Naive thymus-derived CD4-positive, alpha-beta T cell (primary cell): ENCODE measurements at regions of chr22 and their contacts with region 1.

Region 1: DNA sequence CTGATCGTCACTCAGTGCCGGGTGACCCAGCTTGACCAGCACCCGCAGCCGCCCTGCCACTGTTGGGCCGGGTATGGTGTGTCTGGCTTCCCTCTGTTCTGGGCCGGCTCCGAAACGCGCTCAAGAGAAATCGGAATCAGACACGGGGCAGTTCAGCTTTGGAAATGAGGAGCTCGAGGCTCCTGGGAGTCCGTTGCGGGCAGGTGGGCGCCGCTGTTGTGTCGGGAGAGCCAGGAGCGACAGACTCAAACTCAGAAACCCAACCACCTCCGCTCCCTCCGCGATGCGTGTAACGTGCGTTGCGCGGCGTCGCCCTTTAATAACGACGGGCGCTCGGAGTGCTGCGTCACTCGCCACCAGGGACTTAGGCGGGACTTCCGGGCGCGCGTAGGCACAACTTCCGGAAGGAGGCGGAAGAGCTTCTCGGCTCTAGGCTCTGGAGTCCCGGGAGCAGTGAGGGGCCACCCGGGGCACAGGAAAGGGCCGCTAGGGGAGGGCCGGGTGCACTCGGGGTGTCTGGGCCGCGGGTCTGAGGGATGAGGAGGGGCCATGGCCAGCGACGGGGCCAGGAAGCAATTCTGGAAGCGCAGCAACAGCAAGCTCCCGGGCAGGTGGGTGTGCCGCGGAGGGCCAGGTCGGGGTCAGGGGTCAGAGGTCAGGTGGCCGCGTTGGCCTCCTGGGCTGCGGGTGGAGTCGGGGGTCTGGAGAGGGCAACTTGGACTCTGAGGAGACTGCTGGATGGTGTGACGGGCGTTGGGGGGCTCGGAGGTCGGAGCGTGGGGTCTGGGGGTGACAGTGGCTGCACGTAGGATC is at the start of gene TBC1D22A:
- DNase-seq: peak; percentile 89 to 95 (median 93)
- ATAC-seq: peak; percentile 93
- H3K4me3 ChIP-seq: peak within 1 kb of the TSS; percentile 99
- H3K4me3 Mint-ChIP-seq: peak within 1 kb of the TSS; percentile 97 to 100 (median 99)
- H3K27ac ChIP-seq: peak within 1 kb of the TSS; percentile 99
- H3K27ac Mint-ChIP-seq: peak within 1 kb of the TSS; percentile 97 to 100 (median 100)
- H3K4me1 ChIP-seq: peaks cover 28 to 31% of the 10 kb centered on the region in 2 donors
- H3K4me1 Mint-ChIP-seq: peaks cover 46 to 74% (median 63%) of the 10 kb centered on the region in 7 donors
- H3K27me3 ChIP-seq: no peaks in the 10 kb centered on the region
- H3K27me3 Mint-ChIP-seq: no peaks in the 10 kb centered on the region
- total RNA-seq, gene TBC1D22A: 37.5 to 50.1 (median 43.4) TPM

Region 2: GRCh38 chr22:46563381-46564083 is 198.9 kb before region 1 on chr22:
- CTCF ChIA-PET with region 1: interaction called, 9 read pairs
- POLR2A ChIA-PET with region 1: interaction called, 4 read pairs
- intact Hi-C with region 1: loop called in 1 of 2 experiments (anchors 1 kb)
- DNase-seq: peak; percentile 60 to 82 (median 73)
- ATAC-seq: peak; percentile 94
- H3K4me3 ChIP-seq: peak overlapping the region; percentile 34
- H3K4me3 Mint-ChIP-seq: peak overlapping the region in 6 of 10 donors; percentile 54 to 65 (median 58)
- H3K27ac ChIP-seq: no peak overlapping the region
- H3K27ac Mint-ChIP-seq: peak overlapping the region in 1 of 9 donors; percentile 18
- H3K4me1 ChIP-seq: peaks cover 0 to 5% of the 10 kb centered on the region in 2 donors
- H3K4me1 Mint-ChIP-seq: peaks cover 4 to 11% (median 4%) of the 10 kb centered on the region in 7 donors
- H3K27me3 ChIP-seq: no peaks in the 10 kb centered on the region
- H3K27me3 Mint-ChIP-seq: no peaks in the 10 kb centered on the region

Region 3: DNA sequence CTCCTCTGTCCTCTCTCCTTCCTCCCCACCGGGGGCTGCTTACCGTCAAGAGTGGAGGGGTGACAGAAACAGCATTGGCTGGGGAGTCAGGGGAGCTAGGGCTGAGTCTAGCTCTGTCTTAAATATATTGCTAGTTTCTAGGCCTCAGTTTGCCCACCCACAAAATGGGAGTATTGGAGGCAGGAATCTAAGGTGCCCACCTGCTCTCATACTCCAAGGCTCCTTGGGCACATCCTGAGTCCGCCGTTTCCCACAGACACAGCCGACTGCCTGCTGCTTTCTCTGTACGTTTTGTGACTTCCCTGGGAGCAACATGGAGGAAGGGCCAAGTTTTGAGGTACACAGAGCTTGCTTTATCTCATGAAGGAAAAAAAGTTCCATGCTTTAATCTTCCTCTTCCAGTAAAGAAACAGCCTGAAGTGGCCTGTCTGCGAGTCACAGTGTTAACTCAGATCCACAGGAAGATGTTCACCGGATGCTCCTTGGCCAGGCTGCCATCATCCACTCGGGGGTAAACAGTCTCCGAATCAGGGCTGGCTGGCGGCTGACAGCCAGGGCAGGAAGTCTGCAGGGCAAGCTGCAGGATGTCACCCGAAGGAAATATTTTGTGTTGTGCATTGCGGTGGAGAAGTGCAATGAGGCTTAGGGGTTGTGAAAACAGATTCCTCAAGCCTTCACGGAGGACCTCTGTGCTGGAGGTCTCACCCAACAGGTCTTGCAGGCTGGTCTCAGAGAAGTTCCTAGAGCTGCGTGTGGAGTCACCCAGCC is 13.4 kb before region 1 on chr22:
- CTCF ChIA-PET with region 1: interaction called, 22 read pairs
- POLR2A ChIA-PET with region 1: interaction called, 255 read pairs
- intact Hi-C with region 1: loop called in 1 of 2 experiments (anchors 1 kb)
- DNase-seq: peak in 8 of 9 donors; percentile 35 to 83 (median 74)
- ATAC-seq: peak; percentile 64
- H3K4me3 ChIP-seq: peak overlapping the region; percentile 54
- H3K4me3 Mint-ChIP-seq: peak overlapping the region; percentile 63 to 87 (median 81)
- H3K27ac ChIP-seq: peak overlapping the region; percentile 66
- H3K27ac Mint-ChIP-seq: peak overlapping the region; percentile 87 to 99 (median 96)
- H3K4me1 ChIP-seq: peaks cover 29% of the 10 kb centered on the region in 2 donors
- H3K4me1 Mint-ChIP-seq: peaks cover 23 to 34% (median 28%) of the 10 kb centered on the region in 7 donors
- H3K27me3 ChIP-seq: no peaks in the 10 kb centered on the region
- H3K27me3 Mint-ChIP-seq: peaks cover 0 to 3% (median 0%) of the 10 kb centered on the region in 5 donors

Region 4: DNA sequence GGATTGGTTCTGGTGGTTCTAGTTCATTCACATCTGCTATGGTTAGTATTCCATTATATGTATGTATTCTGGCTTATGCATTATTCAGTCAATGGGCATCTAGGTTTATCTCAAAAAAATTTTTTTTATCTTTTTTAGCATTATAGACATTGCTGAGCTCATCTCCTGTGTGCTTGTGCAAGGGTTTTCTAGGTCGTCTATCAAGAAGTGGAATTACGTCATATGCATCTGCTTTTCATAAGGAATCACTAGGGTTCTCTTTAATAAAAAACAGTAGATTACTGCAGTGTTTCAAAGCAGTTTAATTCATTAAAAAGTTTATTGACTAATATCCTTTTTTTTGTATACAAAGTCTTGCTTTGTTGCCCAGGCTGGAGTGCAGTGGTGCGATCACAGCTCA is 21.3 kb after region 1 on chr22:
- CTCF ChIA-PET with region 1: interaction called, 6 read pairs
- POLR2A ChIA-PET with region 1: interaction called, 15 read pairs
- intact Hi-C with region 1: no loop called
- DNase-seq: no peak
- ATAC-seq: no peak
- H3K4me3 ChIP-seq: no peak overlapping the region
- H3K4me3 Mint-ChIP-seq: no peak overlapping the region
- H3K27ac ChIP-seq: no peak overlapping the region
- H3K27ac Mint-ChIP-seq: peak overlapping the region in 4 of 9 donors; percentile 25 to 48 (median 30)
- H3K4me1 ChIP-seq: peaks cover 0 to 4% of the 10 kb centered on the region in 2 donors
- H3K4me1 Mint-ChIP-seq: peaks cover 28 to 74% (median 40%) of the 10 kb centered on the region in 7 donors
- H3K27me3 ChIP-seq: no peaks in the 10 kb centered on the region
- H3K27me3 Mint-ChIP-seq: no peaks in the 10 kb centered on the region

Region 5: GRCh38 chr22:46798366-46799350 is 36.2 kb after region 1 on chr22:
- CTCF ChIA-PET with region 1: interaction called, 70 read pairs
- POLR2A ChIA-PET with region 1: interaction called, 72 read pairs
- intact Hi-C with region 1: loop called (anchors 1 kb)
- DNase-seq: peak; percentile 37 to 78 (median 59)
- ATAC-seq: peak; percentile 84
- H3K4me3 ChIP-seq: no peak overlapping the region
- H3K4me3 Mint-ChIP-seq: peak overlapping the region in 2 of 10 donors; percentile 13 to 34
- H3K27ac ChIP-seq: no peak overlapping the region
- H3K27ac Mint-ChIP-seq: peak overlapping the region; percentile 49 to 91 (median 80)
- H3K4me1 ChIP-seq: peaks cover 7 to 8% of the 10 kb centered on the region in 2 donors
- H3K4me1 Mint-ChIP-seq: peaks cover 11 to 36% (median 20%) of the 10 kb centered on the region in 7 donors
- H3K27me3 ChIP-seq: no peaks in the 10 kb centered on the region
- H3K27me3 Mint-ChIP-seq: no peaks in the 10 kb centered on the region

Region 6: GRCh38 chr22:46843821-46844255 is 81.4 kb after region 1 on chr22:
- CTCF ChIA-PET with region 1: no interaction called
- POLR2A ChIA-PET with region 1: no interaction called
- intact Hi-C with region 1: no loop called
- DNase-seq: no peak
- ATAC-seq: no peak
- H3K4me3 ChIP-seq: no peak overlapping the region
- H3K4me3 Mint-ChIP-seq: no peak overlapping the region
- H3K27ac ChIP-seq: no peak overlapping the region
- H3K27ac Mint-ChIP-seq: peak overlapping the region in 1 of 9 donors; percentile 7
- H3K4me1 ChIP-seq: no peaks in the 10 kb centered on the region
- H3K4me1 Mint-ChIP-seq: peaks cover 11 to 73% (median 39%) of the 10 kb centered on the region in 7 donors
- H3K27me3 ChIP-seq: no peaks in the 10 kb centered on the region
- H3K27me3 Mint-ChIP-seq: no peaks in the 10 kb centered on the region

Region 7: DNA sequence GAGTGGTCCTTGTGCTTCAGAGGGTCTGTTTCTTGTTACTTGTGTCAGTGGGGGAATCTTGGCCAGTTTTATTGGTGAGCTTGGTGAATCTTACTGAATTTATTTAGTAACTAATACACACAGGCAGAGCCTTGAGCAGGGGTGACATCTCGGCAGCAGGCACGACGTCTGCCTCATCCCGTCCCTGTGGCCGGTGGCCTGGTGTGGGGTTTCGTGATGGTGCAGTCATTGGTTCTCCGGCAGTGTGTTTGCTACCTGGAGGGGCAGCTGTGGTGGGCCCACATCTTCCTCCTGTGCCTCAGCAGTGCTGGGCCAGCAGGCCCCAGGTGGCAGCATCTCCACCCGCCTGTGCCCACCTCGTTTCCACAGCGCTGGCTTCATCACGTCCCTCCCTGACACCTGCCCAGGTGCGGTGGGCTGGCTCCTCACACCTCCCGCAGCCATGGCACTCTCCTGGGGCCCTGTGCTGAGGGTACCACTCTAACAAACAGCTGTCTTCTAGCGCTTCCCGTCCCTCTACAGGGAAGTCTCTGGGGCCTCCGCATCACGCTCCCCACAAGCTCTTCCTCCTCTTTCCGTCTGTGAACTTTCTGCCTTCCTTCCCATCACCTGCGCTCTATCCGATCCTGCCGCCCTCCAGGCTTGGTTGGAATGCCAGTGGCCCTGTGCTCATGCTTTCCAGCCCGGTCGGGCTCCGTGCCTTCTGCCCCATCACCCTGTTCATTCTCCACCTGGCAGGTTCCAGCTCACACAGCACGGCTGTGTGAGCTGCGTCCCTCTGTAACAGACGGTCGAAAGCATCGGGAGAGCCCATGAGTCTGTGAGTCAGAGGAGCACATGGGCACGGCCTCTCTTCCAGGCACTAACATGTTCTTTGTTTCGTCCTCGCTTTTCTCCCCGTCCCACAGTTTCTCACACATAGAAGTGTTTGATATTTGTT is 203.4 kb after region 1 on chr22:
- CTCF ChIA-PET with region 1: no interaction called
- POLR2A ChIA-PET with region 1: no interaction called
- intact Hi-C with region 1: no loop called
- DNase-seq: no peak
- ATAC-seq: no peak
- H3K4me3 ChIP-seq: no peak overlapping the region
- H3K4me3 Mint-ChIP-seq: no peak overlapping the region
- H3K27ac ChIP-seq: no peak overlapping the region
- H3K27ac Mint-ChIP-seq: peak overlapping the region in 1 of 9 donors; percentile 1
- H3K4me1 ChIP-seq: no peaks in the 10 kb centered on the region
- H3K4me1 Mint-ChIP-seq: peaks cover 14 to 41% (median 32%) of the 10 kb centered on the region in 7 donors
- H3K27me3 ChIP-seq: no peaks in the 10 kb centered on the region
- H3K27me3 Mint-ChIP-seq: no peaks in the 10 kb centered on the region

Region 8: GRCh38 chr22:47012589-47013411 is 250.4 kb after region 1 on chr22:
- CTCF ChIA-PET with region 1: no interaction called
- POLR2A ChIA-PET with region 1: no interaction called
- intact Hi-C with region 1: no loop called
- DNase-seq: no peak
- ATAC-seq: no peak
- H3K4me3 ChIP-seq: no peak overlapping the region
- H3K4me3 Mint-ChIP-seq: no peak overlapping the region
- H3K27ac ChIP-seq: no peak overlapping the region
- H3K27ac Mint-ChIP-seq: no peak overlapping the region
- H3K4me1 ChIP-seq: no peaks in the 10 kb centered on the region
- H3K4me1 Mint-ChIP-seq: peaks cover 4 to 15% (median 13%) of the 10 kb centered on the region in 7 donors
- H3K27me3 ChIP-seq: no peaks in the 10 kb centered on the region
- H3K27me3 Mint-ChIP-seq: no peaks in the 10 kb centered on the region

Region 9: GRCh38 chr22:47065756-47066615 is 303.5 kb after region 1 on chr22:
- CTCF ChIA-PET with region 1: no interaction called
- POLR2A ChIA-PET with region 1: no interaction called
- intact Hi-C with region 1: no loop called
- DNase-seq: no peak
- ATAC-seq: no peak
- H3K4me3 ChIP-seq: no peak overlapping the region
- H3K4me3 Mint-ChIP-seq: no peak overlapping the region
- H3K27ac ChIP-seq: no peak overlapping the region
- H3K27ac Mint-ChIP-seq: peak overlapping the region in 1 of 9 donors; percentile 59
- H3K4me1 ChIP-seq: peaks cover 0 to 5% of the 10 kb centered on the region in 2 donors
- H3K4me1 Mint-ChIP-seq: peaks cover 4 to 39% (median 33%) of the 10 kb centered on the region in 7 donors
- H3K27me3 ChIP-seq: no peaks in the 10 kb centered on the region
- H3K27me3 Mint-ChIP-seq: no peaks in the 10 kb centered on the region